OCI-LY7 (cell line): ENCODE measurements at regions of chr12 and their contacts with region 1.

Region 1: DNA sequence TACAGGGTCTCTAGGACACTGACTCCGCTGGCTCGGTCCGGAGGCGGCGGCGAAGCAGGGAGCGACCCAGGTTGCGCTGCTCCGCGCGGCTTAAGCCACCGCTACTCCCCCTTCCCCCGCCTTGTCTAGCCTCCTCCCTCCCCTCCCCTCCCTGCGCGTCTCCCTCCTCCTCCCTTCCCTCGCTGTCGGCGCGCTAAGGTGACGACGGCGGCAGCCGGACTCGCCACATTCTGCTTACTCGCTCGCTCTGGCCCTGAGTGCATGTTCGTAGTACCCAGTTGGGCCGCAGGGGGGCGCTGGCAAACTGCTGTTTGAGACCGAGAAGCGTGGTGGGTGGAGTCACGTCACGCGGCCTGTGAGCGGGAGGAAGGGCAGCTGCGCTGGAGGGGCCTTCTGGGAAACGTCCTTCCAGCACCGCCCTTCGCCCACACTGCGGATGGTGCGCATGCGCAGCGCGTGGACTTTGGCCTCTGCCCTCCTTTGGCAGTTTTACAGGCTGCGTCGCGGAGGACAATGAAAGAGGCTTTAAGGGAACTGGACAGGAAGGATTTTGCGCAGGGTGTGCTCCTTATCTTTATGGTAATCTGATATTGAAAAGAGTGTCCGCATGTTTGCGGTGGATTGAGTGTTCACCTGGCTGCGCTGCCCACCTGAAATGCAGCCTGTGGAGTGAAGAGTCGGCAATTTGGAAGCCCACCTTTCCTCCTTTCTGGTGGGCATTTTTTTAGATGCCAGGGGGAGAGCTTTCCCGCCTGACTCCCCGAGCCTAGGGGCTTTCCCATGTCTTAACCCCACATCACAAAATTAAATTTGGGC is at the start of gene SCAF11:
- DNase-seq: peak; percentile 99
- H3K4me3 ChIP-seq: peak within 1 kb of the TSS; percentile 78
- H3K27ac ChIP-seq: peak within 1 kb of the TSS; percentile 92
- H3K4me1 ChIP-seq: peaks cover 37% of the 10 kb centered on the region
- CTCF ChIP-seq: peak; percentile 85
- total RNA-seq, gene SCAF11: 115 and 130 TPM in 2 replicates

Region 2: DNA sequence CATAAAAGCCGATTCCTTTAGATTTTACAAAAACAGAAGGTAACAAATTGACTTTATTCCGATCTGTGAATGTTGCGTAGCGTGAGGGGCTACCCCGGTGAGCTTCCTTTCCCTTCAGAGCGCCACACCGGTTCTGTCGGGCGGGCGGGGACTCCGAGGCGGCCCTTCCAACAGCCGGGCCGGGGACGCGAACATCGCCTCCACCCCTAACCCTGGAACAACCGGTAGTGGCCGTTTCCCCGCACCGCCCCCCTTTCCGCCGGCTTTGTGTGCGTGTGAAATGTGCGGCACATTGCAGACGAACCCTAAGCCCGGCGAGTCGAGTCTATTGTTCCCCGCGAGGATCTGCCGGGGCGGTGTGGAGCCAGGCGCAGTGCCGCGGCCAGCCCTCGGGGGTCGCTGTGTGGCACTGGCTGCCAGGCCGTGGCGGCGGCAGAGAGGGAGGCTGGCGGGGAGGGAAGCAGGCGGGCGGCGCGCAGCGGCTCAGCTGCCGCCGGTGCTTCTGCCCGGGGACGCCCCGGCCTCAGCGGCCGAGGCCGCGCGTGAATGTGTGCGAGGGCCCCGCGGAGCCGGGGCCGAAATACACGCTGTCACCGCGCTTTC is 261.9 kb before region 1 on chr12:
- CTCF ChIA-PET with region 1: interaction called, 3 read pairs
- POLR2A ChIA-PET with region 1: interaction called, 13 read pairs
- intact Hi-C with region 1: loop called (anchors 1 kb)
- DNase-seq: peak; percentile 98
- H3K4me3 ChIP-seq: peak overlapping the region; percentile 98
- H3K27ac ChIP-seq: peak overlapping the region; percentile 97
- H3K4me1 ChIP-seq: peaks cover 25% of the 10 kb centered on the region
- CTCF ChIP-seq: peak; percentile 79

Region 3: GRCh38 chr12:46108721-46109120 is 118.0 kb after region 1 on chr12:
- CTCF ChIA-PET with region 1: no interaction called
- POLR2A ChIA-PET with region 1: interaction called, 6 read pairs
- intact Hi-C with region 1: loop called (anchors 2 kb)
- DNase-seq: peak; percentile 91
- H3K4me3 ChIP-seq: peak overlapping the region; percentile 32
- H3K27ac ChIP-seq: peak overlapping the region; percentile 92
- H3K4me1 ChIP-seq: peaks cover 56% of the 10 kb centered on the region
- CTCF ChIP-seq: no peak

Region 4: DNA sequence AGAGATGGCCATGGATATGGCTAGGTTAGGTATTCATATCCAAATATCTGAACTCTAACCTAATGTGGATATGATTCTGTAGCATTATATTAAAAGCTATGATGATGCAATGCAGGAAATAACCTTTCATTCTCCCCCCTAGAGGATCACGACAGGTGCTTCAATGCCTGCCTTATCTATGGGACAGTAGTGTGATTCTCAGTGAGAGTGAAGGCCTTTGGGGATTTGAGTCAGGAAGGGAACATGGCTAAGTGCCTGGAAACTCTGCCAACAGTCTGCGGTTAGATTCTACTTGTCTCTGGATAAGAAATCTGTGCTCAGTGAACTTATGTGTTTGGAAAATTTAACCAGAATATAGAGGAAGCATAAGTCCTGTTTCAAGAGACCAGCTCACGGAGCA is 196.3 kb after region 1 on chr12:
- CTCF ChIA-PET with region 1: no interaction called
- POLR2A ChIA-PET with region 1: no interaction called
- intact Hi-C with region 1: no loop called
- DNase-seq: no peak
- H3K4me3 ChIP-seq: no peak overlapping the region
- H3K27ac ChIP-seq: no peak overlapping the region
- H3K4me1 ChIP-seq: no peaks in the 10 kb centered on the region
- CTCF ChIP-seq: no peak

Region 5: DNA sequence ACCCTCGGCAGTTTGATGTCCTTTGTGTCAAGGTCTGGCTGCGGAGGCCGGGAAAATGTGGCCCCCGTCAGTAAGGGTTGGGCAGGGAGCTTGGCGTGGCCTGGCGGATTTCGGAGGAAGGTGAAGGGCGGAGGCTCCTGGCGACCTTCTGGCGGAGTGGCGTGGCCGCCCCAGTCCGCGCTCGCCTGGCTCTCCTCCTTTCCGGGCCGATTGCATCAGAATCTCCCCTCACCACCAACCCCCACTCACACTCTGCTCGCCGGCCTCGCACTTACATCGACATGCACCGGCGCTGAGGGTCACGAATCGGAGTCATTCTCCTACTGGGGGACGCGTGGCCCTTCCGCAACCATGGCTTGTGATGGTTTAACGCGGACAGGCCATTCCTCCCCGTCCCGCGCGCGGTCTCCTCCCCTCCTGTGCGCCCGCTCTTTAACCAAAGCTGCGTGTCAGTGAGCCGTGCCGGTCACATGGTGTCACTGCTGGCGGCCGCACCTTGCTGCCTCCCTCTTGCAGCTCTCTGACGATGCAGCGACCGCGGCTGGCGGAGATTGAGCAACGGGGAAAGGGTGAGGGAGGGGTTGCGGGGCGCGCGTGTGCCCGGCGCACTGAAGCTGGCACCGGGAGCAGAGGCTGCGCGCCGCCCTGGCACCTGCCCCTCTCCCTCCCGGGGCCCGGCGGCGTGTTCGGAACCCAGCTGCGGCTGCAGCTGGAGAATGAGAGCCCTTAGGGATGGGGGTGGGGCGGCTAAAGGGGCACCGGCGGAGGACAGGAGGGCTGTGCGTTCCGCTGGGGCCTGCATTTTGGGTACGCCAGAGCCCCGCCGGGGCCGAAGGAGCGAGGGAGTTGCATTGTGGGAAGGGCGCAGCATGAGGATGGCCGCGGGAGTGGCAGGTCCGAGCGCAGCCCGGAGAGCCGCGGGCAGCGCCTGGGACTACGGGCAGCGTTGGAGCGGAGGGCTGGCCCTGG is 278.2 kb after region 1 on chr12 and contains the start of gene SLC38A1:
- CTCF ChIA-PET with region 1: no interaction called
- POLR2A ChIA-PET with region 1: interaction called, 6 read pairs
- intact Hi-C with region 1: loop called (anchors 1 kb)
- DNase-seq: peak; percentile 88
- H3K4me3 ChIP-seq: peak within 1 kb of the TSS; percentile 92
- H3K27ac ChIP-seq: peak within 1 kb of the TSS; percentile 91
- H3K4me1 ChIP-seq: peaks cover 44% of the 10 kb centered on the region
- CTCF ChIP-seq: 0 out of 2 replicates have a peak, but pooled peaks have one; percentile 25
- total RNA-seq, gene SLC38A1: 114 and 117 TPM in 2 replicates

Region 6: DNA sequence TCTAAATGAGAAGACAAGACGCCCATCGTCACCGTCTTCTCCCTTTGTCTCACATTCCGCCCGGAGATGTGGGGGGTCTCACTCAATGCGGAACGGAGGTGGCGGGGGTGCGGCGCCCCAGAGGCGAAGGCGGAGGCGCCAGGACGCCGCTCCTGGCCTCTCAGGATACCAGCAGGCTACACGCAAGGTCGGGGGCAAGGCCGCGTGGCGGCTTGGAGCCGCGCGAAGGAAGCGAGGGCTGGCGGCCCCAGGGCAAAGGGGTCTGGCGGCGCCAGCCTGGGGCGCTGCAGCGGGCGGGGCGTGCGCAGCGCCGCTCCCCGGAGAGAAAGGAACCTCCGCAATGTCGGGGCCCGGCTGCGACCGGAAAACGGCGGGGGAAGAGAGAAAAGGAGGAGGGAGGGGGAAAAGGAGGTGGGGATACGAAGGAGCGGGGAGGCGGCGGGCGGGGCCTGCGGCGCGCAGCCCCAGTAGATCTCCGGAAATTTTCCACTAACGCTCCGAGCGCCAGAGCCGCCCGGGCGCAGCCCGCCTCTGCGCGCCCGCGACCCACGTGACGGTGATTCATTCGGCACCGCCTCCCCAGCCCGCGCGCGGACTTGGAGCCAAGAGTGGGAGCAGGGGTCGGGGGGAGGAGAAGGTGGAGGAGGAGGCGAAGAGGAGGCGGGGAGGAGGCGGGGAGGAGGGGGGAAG is 392.4 kb after region 1 on chr12:
- CTCF ChIA-PET with region 1: interaction called, 6 read pairs
- POLR2A ChIA-PET with region 1: no interaction called
- intact Hi-C with region 1: loop called (anchors 1 kb)
- DNase-seq: peak; percentile 86
- H3K4me3 ChIP-seq: peak overlapping the region; percentile 74
- H3K27ac ChIP-seq: peak overlapping the region; percentile 28
- H3K4me1 ChIP-seq: peaks cover 46% of the 10 kb centered on the region
- CTCF ChIP-seq: peak; percentile 61